ENCODE measurements at regions of chr14 and their contacts with region 1.

Region 1: DNA sequence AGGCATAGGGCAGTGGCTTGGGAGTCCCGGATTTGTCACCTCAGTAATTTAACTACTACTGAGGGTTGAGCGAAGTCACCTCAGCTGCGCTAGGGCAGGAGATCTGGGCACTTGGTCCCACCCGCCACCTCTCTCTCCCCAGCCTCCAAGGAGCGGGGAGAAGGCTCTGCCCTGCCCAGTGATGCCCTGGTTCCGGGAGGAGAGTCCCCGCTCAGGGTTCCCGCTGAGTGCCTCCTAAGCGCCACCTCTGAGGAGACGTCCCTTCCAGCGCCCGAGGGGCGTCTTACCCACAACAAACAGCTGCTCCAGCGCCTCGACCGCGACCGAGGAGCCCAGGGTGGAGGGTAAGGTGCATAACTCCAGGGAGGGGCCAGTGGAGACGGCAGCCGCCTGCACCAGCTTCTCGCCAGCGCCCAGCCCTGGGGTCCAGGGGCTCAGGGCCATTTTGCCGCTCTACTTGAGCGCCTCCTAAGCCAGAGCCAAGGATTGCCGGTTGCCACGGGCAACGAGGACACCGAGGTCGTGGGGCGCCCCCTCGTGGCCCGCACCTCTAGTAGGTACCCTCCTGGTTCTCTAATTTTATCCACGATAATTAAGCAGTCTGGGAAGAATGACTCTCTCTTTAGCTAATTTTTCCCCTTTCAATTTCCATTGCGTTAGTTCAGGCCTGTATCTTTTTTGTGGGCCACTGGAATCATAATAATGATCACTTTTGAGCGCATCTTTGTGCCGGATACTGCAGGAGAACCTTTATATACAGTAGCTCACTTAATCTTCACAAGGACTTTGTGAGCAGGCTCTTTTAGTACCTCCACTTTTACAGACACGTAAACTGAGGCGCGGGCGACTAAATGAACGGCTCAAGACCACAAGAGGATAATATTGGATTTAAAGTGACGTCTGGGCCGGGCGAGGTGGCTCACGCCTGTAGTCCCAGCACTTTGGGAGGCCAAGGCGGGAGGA is at the start of gene CCDC175:
- DNase-seq: no peak
- H3K4me3 ChIP-seq: peak within 1 kb of the TSS; percentile 44
- CTCF ChIP-seq: peak; percentile 73

Region 2: GRCh38 chr14:59294662-59294992 is 282.0 kb before region 1 on chr14:
- CTCF ChIA-PET with region 1: no interaction called
- POLR2A ChIA-PET with region 1: no interaction called
- DNase-seq: no peak
- H3K4me3 ChIP-seq: no peak overlapping the region
- CTCF ChIP-seq: no peak

Region 3: DNA sequence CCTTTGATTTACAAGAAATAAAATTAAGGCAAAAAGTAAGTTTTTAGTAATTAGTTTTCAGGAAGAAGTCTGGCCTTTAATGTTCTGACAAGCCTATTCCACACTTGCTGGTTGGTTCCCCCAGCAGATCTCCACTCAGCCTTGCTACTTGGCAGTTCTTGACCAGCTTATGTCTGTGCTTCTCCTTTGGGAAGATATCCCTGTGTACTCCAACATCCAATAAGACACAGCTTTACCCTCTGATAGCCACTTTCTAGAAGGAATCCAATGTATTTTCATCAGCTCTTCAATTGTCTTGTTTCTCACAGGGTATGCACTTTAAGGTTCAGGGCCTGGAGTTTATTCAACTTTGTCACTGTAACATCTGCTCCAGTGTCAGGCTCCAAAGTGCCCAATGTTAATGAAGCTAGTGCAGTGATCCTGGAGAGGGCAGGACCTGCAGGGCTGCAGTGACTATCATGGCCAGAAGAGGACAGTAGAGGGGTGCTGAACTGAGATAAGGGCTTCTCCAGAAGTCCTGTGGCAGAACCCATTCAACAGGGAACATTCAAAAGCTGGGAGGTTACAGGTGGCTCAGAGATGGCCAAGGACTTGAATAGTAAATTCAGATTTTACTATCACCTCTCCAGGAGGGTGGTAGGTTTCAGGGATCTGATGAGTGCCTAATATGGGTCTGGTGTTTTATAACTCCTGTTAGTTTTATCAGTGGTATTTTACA is 69.4 kb before region 1 on chr14:
- CTCF ChIA-PET with region 1: interaction called, 19 read pairs
- POLR2A ChIA-PET with region 1: no interaction called
- DNase-seq: no peak
- H3K4me3 ChIP-seq: no peak overlapping the region
- CTCF ChIP-seq: peak; percentile 84

Region 4: DNA sequence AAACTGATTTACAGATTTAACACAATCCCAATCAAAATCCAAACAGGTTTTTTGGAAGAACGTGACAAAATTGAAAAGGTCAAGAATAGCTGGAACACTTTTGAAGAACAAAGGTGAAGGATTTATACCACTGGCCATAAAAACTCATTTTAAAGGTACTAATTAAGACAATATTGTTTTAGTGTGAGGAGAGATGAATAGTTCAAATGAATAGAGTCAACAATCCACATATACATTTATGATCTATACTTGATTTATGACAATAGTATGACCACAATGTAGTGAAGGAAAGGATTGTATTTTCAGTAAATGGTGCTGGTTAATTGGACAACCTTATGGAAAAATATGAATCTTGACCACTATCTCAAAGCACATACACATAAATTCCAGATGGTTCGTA is 29.3 kb before region 1 on chr14:
- CTCF ChIA-PET with region 1: interaction called, 10 read pairs
- POLR2A ChIA-PET with region 1: no interaction called
- DNase-seq: no peak
- H3K4me3 ChIP-seq: no peak overlapping the region
- CTCF ChIP-seq: no peak

Region 5: GRCh38 chr14:59564366-59564765 is 12.2 kb before region 1 on chr14:
- CTCF ChIA-PET with region 1: interaction called, 34 read pairs
- POLR2A ChIA-PET with region 1: no interaction called
- DNase-seq: no peak
- H3K4me3 ChIP-seq: no peak overlapping the region
- CTCF ChIP-seq: no peak

Region 6: GRCh38 chr14:59657769-59658168 is 81.2 kb after region 1 on chr14:
- CTCF ChIA-PET with region 1: no interaction called
- POLR2A ChIA-PET with region 1: no interaction called
- DNase-seq: no peak
- H3K4me3 ChIP-seq: no peak overlapping the region
- CTCF ChIP-seq: no peak

Measured in AG04449 (cell line).